Activated CD8-positive, alpha-beta T cell treated with anti-CD3 and anti-CD28 coated beads for 36 hours (primary cell): ENCODE measurements at regions of chr11 and their contacts with region 1.

Region 1: GRCh38 chr11:94142308-94143281 is 14.0 kb downstream of the PANX1 start:
- DNase-seq: no peak
- ATAC-seq: no peak
- H3K4me3 Mint-ChIP-seq: no peak overlapping the region
- H3K27ac Mint-ChIP-seq: no peak overlapping the region
- H3K4me1 Mint-ChIP-seq: peaks cover 71% of the 10 kb centered on the region
- H3K27me3 Mint-ChIP-seq: no peaks in the 10 kb centered on the region
- CTCF ChIP-seq: no peak

Region 2: DNA sequence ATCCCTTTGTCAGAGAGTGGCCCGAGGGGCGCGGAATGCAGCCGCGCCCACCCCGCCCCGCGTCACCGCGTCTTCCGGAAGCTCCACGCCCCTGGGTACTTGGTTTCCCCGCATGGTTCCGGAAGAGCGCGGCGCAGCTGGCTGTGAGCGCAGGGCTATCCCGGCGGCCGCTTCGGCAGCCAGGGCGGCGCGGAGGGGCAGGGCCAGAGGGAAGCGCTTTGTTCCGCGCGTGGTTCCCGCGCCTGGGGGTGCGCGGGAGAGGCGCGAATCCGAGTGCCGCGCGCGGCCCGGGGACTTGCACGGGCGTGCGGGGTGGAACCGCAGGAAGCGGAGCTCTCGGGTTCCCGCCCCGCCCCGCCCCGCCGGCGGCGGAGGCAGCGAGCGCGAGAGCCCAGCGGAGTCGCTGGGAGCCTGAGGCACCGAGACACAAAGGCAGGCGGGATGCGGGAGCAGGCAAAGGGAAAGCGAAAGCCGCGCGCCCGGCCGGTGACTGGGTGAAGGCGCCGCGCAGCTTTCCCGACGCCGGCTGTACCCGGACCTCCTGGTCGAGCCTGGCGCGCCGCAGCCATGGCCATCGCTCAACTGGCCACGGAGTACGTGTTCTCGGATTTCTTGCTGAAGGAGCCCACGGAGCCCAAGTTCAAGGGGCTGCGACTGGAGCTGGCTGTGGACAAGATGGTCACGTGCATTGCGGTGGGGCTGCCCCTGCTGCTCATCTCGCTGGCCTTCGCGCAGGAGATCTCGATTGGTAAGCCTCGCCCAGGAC is 13.7 kb before region 1 on chr11 and contains the start of gene PANX1:
- CTCF ChIA-PET with region 1: interaction called, 8 read pairs
- POLR2A ChIA-PET with region 1: interaction called, 12 read pairs
- intact Hi-C with region 1: no loop called
- DNase-seq: peak; percentile 81
- ATAC-seq: peak; percentile 82
- H3K4me3 Mint-ChIP-seq: no peak within 1 kb of the TSS
- H3K27ac Mint-ChIP-seq: peak within 1 kb of the TSS; percentile 92
- H3K4me1 Mint-ChIP-seq: peaks cover 21% of the 10 kb centered on the region
- H3K27me3 Mint-ChIP-seq: no peaks in the 10 kb centered on the region
- CTCF ChIP-seq: no peak
- total RNA-seq, gene PANX1: 10.8 to 11.4 TPM